PC-3 (cell line): ENCODE measurements at regions of chr4 and their contacts with region 1.

Region 1: GRCh38 chr4:92172203-92172602 is 131.6 kb upstream of the GRID2 start:
- DNase-seq: peak; percentile 30
- ATAC-seq: peak; percentile 48; the same call in 1 of the 2 replicates
- H3K4me3 ChIP-seq: no peak overlapping the region
- H3K27ac ChIP-seq: no peak overlapping the region
- H3K4me1 ChIP-seq: no peaks in the 10 kb centered on the region
- H3K27me3 ChIP-seq: no peaks in the 10 kb centered on the region
- CTCF ChIP-seq: peak; percentile 64

Region 2: DNA sequence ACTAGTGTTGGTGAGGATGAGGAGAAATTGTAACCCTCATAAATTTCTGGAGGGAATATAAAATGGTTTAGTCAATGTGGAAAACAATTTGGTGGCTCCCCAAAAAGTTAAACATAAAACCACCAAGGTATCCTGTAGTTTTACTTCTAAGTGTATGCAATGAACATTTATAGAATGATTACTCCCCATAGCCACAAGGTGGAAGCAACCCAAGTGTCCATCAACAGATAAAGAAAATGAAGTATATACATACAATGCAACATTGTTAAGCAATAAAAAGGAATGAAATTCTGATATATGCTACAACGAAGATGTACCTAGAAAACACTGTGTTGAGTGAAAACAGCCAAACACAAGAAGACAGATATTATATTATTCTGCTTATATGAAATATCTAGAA is 437.5 kb before region 1 on chr4:
- CTCF ChIA-PET with region 1: no interaction called
- POLR2A ChIA-PET with region 1: no interaction called
- intact Hi-C with region 1: loop called (anchors 10 kb)
- DNase-seq: peak; percentile 43
- ATAC-seq: 0 out of 2 replicates have a peak, but pooled peaks have one; percentile 29
- H3K4me3 ChIP-seq: no peak overlapping the region
- H3K27ac ChIP-seq: no peak overlapping the region
- H3K4me1 ChIP-seq: no peaks in the 10 kb centered on the region
- H3K27me3 ChIP-seq: no peaks in the 10 kb centered on the region
- CTCF ChIP-seq: peak; percentile 56

Region 3: DNA sequence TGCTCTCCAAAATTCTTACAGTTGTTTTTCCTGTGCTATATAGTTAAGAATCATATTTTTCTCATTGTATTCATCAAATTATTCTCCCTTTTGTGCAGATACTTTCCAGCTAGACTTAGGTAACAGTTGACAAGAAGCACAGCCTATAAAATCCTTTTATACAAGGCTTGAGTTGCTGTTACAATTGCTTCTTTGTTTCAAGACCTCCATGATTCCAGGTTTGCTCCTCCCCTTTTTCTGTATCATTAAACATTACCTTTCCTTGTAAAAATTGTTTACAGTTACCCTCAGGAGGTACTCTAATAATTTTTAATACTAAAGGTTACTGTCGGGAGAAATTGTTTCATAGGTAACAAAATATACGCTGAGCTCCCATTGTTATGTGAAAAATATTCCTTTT is 60.7 kb before region 1 on chr4:
- CTCF ChIA-PET with region 1: no interaction called
- POLR2A ChIA-PET with region 1: no interaction called
- intact Hi-C with region 1: no loop called
- DNase-seq: peak; percentile 35
- ATAC-seq: peak; percentile 64
- H3K4me3 ChIP-seq: no peak overlapping the region
- H3K27ac ChIP-seq: no peak overlapping the region
- H3K4me1 ChIP-seq: 0 out of 2 replicates have a peak, but pooled peaks cover 5% of the 10 kb centered on the region
- H3K27me3 ChIP-seq: no peaks in the 10 kb centered on the region
- CTCF ChIP-seq: no peak

Region 4: DNA sequence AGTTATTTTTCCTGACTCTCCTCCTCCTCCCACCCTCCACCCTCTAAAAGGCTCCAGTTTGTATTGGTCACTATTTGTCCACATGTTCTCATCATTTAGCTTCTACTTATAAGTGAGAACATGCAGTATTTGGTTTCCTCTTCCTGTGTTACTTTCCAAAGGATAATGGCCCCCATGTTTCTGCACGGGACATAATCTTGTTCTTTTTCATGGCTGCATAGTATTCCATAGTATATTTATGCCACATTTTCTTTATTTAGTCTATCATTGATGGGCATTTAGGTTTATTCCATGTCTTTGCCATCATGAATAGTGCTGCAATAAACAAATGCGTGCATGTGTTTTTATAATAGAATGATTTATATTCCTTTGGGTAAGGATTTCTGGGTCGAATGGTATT is 35.8 kb before region 1 on chr4:
- CTCF ChIA-PET with region 1: no interaction called
- POLR2A ChIA-PET with region 1: no interaction called
- intact Hi-C with region 1: no loop called
- DNase-seq: no peak
- ATAC-seq: no peak
- H3K4me3 ChIP-seq: no peak overlapping the region
- H3K27ac ChIP-seq: no peak overlapping the region
- H3K4me1 ChIP-seq: no peaks in the 10 kb centered on the region
- H3K27me3 ChIP-seq: no peaks in the 10 kb centered on the region
- CTCF ChIP-seq: no peak

Region 5: DNA sequence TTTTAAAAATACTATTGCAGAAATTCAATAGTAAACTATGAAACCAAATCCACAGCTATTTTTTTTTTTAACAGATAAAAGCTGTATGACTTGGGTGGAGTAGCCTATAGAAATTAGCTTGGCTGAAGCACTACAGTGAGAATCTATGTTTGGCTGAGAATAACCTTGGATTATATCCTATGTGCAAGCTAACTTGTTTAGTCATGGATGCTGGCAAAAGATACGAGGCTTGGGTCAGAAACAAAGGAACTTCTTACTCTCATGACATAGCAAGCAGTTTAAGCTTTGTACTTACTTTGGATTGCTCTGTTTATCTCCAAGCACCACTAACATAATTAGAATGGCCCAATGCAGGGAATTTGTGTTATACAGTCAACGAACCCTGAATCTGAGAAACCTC is 12.4 kb after region 1 on chr4:
- CTCF ChIA-PET with region 1: no interaction called
- POLR2A ChIA-PET with region 1: no interaction called
- intact Hi-C with region 1: no loop called
- DNase-seq: no peak
- ATAC-seq: no peak
- H3K4me3 ChIP-seq: no peak overlapping the region
- H3K27ac ChIP-seq: no peak overlapping the region
- H3K4me1 ChIP-seq: no peaks in the 10 kb centered on the region
- H3K27me3 ChIP-seq: no peaks in the 10 kb centered on the region
- CTCF ChIP-seq: no peak

Region 6: GRCh38 chr4:92299152-92299551 is 126.9 kb after region 1 on chr4:
- CTCF ChIA-PET with region 1: no interaction called
- POLR2A ChIA-PET with region 1: no interaction called
- intact Hi-C with region 1: loop called (anchors 1 kb)
- DNase-seq: peak; percentile 27
- ATAC-seq: no peak
- H3K4me3 ChIP-seq: no peak overlapping the region
- H3K27ac ChIP-seq: no peak overlapping the region
- H3K4me1 ChIP-seq: 0 out of 2 replicates have a peak, but pooled peaks cover 4% of the 10 kb centered on the region
- H3K27me3 ChIP-seq: no peaks in the 10 kb centered on the region
- CTCF ChIP-seq: peak; percentile 63

Region 7: DNA sequence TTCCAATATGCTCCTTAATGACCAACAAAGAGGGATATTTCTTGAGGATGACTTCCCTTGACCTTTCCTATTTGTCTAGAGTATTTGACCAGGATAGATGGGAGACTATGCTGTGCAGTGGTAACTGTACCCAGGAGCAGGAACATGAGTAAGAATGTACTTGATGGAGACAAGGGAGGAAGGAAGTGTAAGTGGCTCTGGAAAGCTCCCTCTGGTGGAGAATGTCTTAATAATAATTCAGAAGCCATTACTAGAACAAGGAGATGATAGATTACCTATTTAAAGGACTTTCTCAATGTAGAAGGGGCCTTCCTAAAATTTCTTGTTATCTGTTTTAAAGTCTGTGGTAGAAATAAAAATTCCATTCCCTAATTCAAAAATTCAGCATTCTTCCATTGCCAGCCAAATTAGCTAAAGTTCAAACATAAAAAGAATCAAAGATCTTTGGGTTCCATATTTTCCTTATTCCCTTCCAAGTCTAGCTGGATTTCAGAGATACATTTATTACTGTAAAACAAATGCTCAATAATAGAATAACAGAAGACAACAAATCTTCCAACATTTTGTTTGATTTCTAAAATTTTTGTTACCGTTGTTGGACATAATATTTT is 215.4 kb after region 1 on chr4:
- CTCF ChIA-PET with region 1: no interaction called
- POLR2A ChIA-PET with region 1: no interaction called
- intact Hi-C with region 1: loop called (anchors 2 kb)
- DNase-seq: peak; percentile 69
- ATAC-seq: peak; percentile 65
- H3K4me3 ChIP-seq: no peak overlapping the region
- H3K27ac ChIP-seq: no peak overlapping the region
- H3K4me1 ChIP-seq: no peaks in the 10 kb centered on the region
- H3K27me3 ChIP-seq: no peaks in the 10 kb centered on the region
- CTCF ChIP-seq: peak; percentile 73

Region 8: GRCh38 chr4:92406487-92406886 is 234.3 kb after region 1 on chr4:
- CTCF ChIA-PET with region 1: no interaction called
- POLR2A ChIA-PET with region 1: no interaction called
- intact Hi-C with region 1: no loop called
- DNase-seq: no peak
- ATAC-seq: no peak
- H3K4me3 ChIP-seq: no peak overlapping the region
- H3K27ac ChIP-seq: no peak overlapping the region
- H3K4me1 ChIP-seq: no peaks in the 10 kb centered on the region
- H3K27me3 ChIP-seq: no peaks in the 10 kb centered on the region
- CTCF ChIP-seq: no peak

Region 9: GRCh38 chr4:92551616-92552015 is 379.4 kb after region 1 on chr4:
- CTCF ChIA-PET with region 1: no interaction called
- POLR2A ChIA-PET with region 1: no interaction called
- intact Hi-C with region 1: loop called (anchors 5 kb)
- DNase-seq: no peak
- ATAC-seq: no peak
- H3K4me3 ChIP-seq: no peak overlapping the region
- H3K27ac ChIP-seq: no peak overlapping the region
- H3K4me1 ChIP-seq: no peaks in the 10 kb centered on the region
- H3K27me3 ChIP-seq: no peaks in the 10 kb centered on the region
- CTCF ChIP-seq: peak; percentile 21; the same call in 1 of the 2 replicates